Sigmoid colon (tissue), 7 donors: ENCODE measurements at regions of chr4 and their contacts with region 1.

Region 1: GRCh38 chr4:185343726-185344581 is 51.8 kb downstream of the LRP2BP start:
- DNase-seq: peak; percentile 93
- H3K4me3 ChIP-seq: no peak overlapping the region
- H3K27ac ChIP-seq: peak overlapping the region; percentile 61 to 88 (median 80)
- H3K4me1 ChIP-seq: peaks cover 0 to 37% (median 23%) of the 10 kb centered on the region in 4 donors
- H3K27me3 ChIP-seq: no peaks in the 10 kb centered on the region
- CTCF ChIP-seq: no peak
- EP300 ChIP-seq: peak; percentile 48 to 93 (median 85)
- POLR2A ChIP-seq: no peak

Region 2: DNA sequence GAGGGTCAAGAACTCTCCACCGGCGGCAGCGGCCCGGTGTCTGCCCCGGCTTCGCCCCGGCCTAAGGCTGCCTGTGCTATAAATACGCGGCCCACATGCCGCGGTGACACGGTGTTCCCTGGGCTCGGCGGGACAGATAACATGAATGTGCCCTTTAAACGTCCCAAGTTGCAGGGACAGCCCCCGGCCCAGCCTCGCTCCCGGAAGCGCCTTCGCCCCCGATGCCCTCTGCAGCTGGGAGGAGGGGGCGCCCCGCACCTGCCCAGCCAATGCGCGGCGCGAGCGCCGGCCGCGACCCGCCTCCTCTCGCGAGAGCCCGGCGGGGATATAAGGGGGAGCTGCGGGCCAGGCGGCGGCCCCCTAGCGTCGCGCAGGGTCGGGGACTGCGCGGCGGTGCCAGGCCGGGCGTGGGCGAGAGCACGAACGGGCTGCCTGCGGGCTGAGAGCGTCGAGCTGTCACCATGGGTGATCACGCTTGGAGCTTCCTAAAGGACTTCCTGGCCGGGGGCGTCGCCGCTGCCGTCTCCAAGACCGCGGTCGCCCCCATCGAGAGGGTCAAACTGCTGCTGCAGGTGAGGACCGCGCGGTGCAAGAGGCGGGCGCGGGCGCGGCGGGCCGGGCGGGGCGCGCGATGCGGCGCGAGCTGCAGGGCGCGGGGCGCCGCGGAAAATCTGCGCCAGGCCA is 200.9 kb before region 1 on chr4 and contains the start of gene SLC25A4:
- intact Hi-C with region 1: loop called (anchors 10 kb)
- DNase-seq: peak; percentile 94
- H3K4me3 ChIP-seq: peak within 1 kb of the TSS; percentile 60 to 81 (median 78)
- H3K27ac ChIP-seq: peak within 1 kb of the TSS; percentile 88 to 98 (median 94)
- H3K4me1 ChIP-seq: peaks cover 0 to 41% (median 34%) of the 10 kb centered on the region in 4 donors
- H3K27me3 ChIP-seq: no peaks in the 10 kb centered on the region
- CTCF ChIP-seq: peak in 3 of 4 experiments; percentile 15 to 57 (median 50)
- EP300 ChIP-seq: peak in 1 of 4 donors; percentile 7
- POLR2A ChIP-seq: peak; percentile 62
- total RNA-seq, gene SLC25A4: 89.1 to 127 (median 112) TPM

Region 3: GRCh38 chr4:185209031-185209851 is 134.7 kb before region 1 on chr4 and contains the start of gene SNX25:
- intact Hi-C with region 1: loop called (anchors 2 kb)
- DNase-seq: peak; percentile 92
- H3K4me3 ChIP-seq: peak within 1 kb of the TSS; percentile 45 to 90 (median 89)
- H3K27ac ChIP-seq: peak within 1 kb of the TSS; percentile 86 to 98 (median 90)
- H3K4me1 ChIP-seq: peaks cover 0 to 43% (median 28%) of the 10 kb centered on the region in 4 donors
- H3K27me3 ChIP-seq: no peaks in the 10 kb centered on the region
- CTCF ChIP-seq: no peak
- EP300 ChIP-seq: no peak
- POLR2A ChIP-seq: no peak
- total RNA-seq, gene SNX25: 22.7 to 40.5 (median 38.4) TPM

Region 4: GRCh38 chr4:185625503-185625902 is 281.5 kb after region 1 on chr4:
- intact Hi-C with region 1: no loop called
- DNase-seq: no peak
- H3K4me3 ChIP-seq: no peak overlapping the region
- H3K27ac ChIP-seq: peak overlapping the region in 1 of 4 donors; percentile 5
- H3K4me1 ChIP-seq: no peaks in the 10 kb centered on the region
- H3K27me3 ChIP-seq: no peaks in the 10 kb centered on the region
- CTCF ChIP-seq: no peak
- EP300 ChIP-seq: no peak
- POLR2A ChIP-seq: no peak